ENCODE measurements at regions of chr6 and their contacts with region 1.

Region 1: GRCh38 chr6:149028767-149029405 is 282.1 kb downstream of the UST start:
- DNase-seq: peak; percentile 80
- H3K4me3 ChIP-seq: no peak overlapping the region
- H3K27ac ChIP-seq: no peak overlapping the region
- H3K4me1 ChIP-seq: no peaks in the 10 kb centered on the region
- H3K27me3 ChIP-seq: no peaks in the 10 kb centered on the region
- CTCF ChIP-seq: peak; percentile 69 to 89 (median 84)
- POLR2A ChIP-seq: no peak

Region 2: GRCh38 chr6:147423111-147423510 is 1605.8 kb before region 1 on chr6:
- intact Hi-C with region 1: no loop called
- DNase-seq: no peak
- H3K4me3 ChIP-seq: no peak overlapping the region
- H3K27ac ChIP-seq: no peak overlapping the region
- H3K4me1 ChIP-seq: no peaks in the 10 kb centered on the region
- H3K27me3 ChIP-seq: no peaks in the 10 kb centered on the region
- CTCF ChIP-seq: no peak
- POLR2A ChIP-seq: no peak

Region 3: DNA sequence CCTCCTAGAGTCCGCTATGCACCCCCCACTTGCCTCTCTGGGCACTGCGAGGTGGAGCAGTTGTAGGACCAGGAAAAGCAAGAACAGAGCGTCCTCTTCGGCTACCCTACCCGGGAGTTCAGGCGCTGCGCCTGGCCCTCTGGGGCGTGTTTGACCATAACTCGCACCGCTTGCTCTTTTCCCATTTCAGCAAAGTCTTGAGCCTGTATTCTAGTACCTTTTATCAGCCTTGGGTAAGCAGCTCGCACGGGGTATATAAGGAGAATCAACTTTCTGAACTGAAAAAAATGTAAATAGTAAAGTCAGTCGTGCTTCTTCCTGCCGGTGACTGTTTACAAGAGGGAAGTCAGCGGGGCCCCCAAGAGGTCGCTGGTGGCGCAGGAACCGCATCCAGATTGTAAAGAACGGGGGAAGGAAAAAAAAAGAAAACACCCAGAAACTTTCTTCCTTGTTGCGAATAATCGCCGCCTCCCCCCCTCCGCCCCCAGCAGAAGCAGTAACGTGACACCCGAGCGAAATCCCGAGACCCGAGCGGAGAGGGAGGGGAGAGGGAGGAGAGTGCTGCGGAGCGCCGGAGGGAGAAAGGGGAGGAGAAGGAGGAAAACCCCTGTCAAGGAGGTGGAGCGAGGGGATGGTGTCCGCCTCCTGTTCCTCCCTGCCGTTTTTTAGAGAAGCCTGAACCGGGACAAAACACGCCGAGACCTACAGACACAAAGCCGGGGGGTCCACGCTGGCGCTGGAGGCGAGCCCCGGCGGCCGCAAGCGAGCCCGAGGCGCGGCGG is 282.3 kb before region 1 on chr6 and contains the start of gene UST:
- intact Hi-C with region 1: loop called (anchors 2 kb)
- DNase-seq: peak; percentile 87
- H3K4me3 ChIP-seq: peak within 1 kb of the TSS; percentile 61 to 65
- H3K27ac ChIP-seq: peak within 1 kb of the TSS; percentile 72 to 83
- H3K4me1 ChIP-seq: no peaks in the 10 kb centered on the region
- H3K27me3 ChIP-seq: no peaks in the 10 kb centered on the region
- CTCF ChIP-seq: peak; percentile 6 to 53 (median 43)
- POLR2A ChIP-seq: peak; percentile 65
- total RNA-seq, gene UST: 6.6 to 12.9 TPM

Region 4: DNA sequence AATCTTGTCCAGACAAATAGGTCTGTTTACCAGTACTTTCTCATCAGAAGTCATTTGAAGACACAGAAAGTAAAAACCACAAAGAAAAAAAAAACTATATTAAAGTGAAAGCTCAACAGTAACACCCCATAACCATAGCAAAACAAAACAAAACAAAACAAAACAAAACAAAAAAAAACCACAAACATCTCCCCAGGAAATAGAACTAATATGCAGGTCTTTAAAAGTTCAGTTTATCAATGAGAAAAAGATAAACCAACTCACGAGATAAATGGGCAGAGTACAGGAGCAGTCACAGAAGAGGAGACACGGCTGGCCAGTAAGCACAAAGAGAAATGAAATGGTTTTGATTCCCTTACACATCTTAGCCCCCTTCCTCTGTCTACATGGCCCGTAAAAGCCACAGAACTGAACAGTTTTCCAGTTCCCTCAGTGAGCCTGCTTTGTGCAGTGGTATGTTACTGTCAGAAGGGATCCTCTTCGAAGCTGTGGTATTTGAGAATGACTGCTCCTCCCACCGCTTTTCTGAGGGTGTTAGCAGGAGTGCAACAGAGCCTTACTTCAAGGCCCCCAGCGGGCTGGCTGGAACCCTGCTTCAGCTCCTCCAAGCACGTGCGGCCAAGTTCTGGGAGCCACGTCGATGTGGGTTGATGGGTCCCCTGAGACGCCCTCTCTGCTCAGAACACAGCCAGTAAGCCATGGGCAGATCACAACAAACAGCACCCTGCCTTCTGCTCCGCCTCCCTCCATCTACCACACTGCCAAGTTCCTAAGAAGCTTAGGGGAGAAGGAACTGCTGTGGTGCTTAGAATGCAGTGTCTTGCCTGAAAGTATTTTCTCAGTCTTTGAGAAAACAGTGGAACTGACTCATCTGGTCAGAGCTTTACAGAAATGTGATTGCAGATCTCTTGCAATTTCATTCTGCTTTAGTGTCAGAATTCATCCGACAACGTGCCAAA is 268.0 kb before region 1 on chr6:
- intact Hi-C with region 1: no loop called
- DNase-seq: peak; percentile 36
- H3K4me3 ChIP-seq: peak overlapping the region; percentile 10 to 15
- H3K27ac ChIP-seq: peak overlapping the region; percentile 38 to 68
- H3K4me1 ChIP-seq: no peaks in the 10 kb centered on the region
- H3K27me3 ChIP-seq: no peaks in the 10 kb centered on the region
- CTCF ChIP-seq: no peak
- POLR2A ChIP-seq: no peak

Region 5: DNA sequence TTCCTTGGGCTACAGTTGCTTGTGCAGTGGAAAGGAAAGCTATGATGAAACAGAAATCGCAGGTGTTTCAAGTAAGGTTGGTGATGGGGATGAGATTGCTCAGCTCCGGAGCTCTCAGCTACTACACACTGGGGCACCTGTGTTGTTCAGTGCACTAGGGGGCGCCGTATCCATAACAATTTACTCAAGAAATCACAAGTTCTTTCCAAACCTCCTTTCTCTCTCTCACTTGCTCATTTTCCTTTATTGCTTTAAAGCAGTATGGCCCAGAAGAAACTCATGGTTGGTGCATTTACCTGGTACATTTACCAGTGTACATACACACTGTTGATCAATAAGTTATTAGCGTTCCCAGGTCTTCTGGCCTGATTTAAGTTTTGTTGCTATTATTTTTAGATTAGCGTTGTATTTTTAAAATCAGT is 53.4 kb after region 1 on chr6:
- intact Hi-C with region 1: loop called (anchors 5 kb)
- DNase-seq: peak; percentile 87
- H3K4me3 ChIP-seq: no peak overlapping the region
- H3K27ac ChIP-seq: no peak overlapping the region
- H3K4me1 ChIP-seq: peaks cover 4% of the 10 kb centered on the region
- H3K27me3 ChIP-seq: no peaks in the 10 kb centered on the region
- CTCF ChIP-seq: peak; percentile 25 to 85 (median 80)
- POLR2A ChIP-seq: no peak

Region 6: GRCh38 chr6:149454386-149454848 is 425.5 kb after region 1 on chr6:
- intact Hi-C with region 1: loop called (anchors 5 kb)
- DNase-seq: peak; percentile 85
- H3K4me3 ChIP-seq: no peak overlapping the region
- H3K27ac ChIP-seq: peak overlapping the region; percentile 52 to 60
- H3K4me1 ChIP-seq: peaks cover 8% of the 10 kb centered on the region
- H3K27me3 ChIP-seq: no peaks in the 10 kb centered on the region
- CTCF ChIP-seq: no peak
- POLR2A ChIP-seq: no peak